ENCODE measurements at regions of chr17 and their contacts with region 1.

Region 1: GRCh38 chr17:29115961-29116803 is 64.0 kb downstream of the MYO18A start:
- DNase-seq: no peak
- H3K4me3 ChIP-seq: no peak overlapping the region
- H3K27ac ChIP-seq: peak overlapping the region in 4 of 8 donors; percentile 57 to 81 (median 70)
- H3K4me1 ChIP-seq: peaks cover 5 to 60% (median 26%) of the 10 kb centered on the region in 6 donors
- H3K27me3 ChIP-seq: no peaks in the 10 kb centered on the region
- CTCF ChIP-seq: peak in 6 of 11 experiments; percentile 4 to 59 (median 43)
- POLR2A ChIP-seq: no peak

Region 2: GRCh38 chr17:28963841-28964240 is 152.3 kb before region 1 on chr17:
- intact Hi-C with region 1: loop called (anchors 2 kb)
- DNase-seq: peak; percentile 40
- H3K4me3 ChIP-seq: no peak overlapping the region
- H3K27ac ChIP-seq: no peak overlapping the region
- H3K4me1 ChIP-seq: peaks cover 0 to 29% (median 14%) of the 10 kb centered on the region in 6 donors
- H3K27me3 ChIP-seq: peaks cover 0 to 42% (median 12%) of the 10 kb centered on the region in 7 donors
- CTCF ChIP-seq: no peak
- POLR2A ChIP-seq: no peak